ENCODE measurements at regions of chr9 and their contacts with region 1.

Region 1: GRCh38 chr9:92276331-92277032 is 17.0 kb downstream of the IARS1 start:
- DNase-seq: no peak
- H3K4me3 ChIP-seq: no peak overlapping the region
- H3K27ac ChIP-seq: no peak overlapping the region
- H3K4me1 ChIP-seq: peaks cover 15% of the 10 kb centered on the region
- CTCF ChIP-seq: no peak

Region 2: DNA sequence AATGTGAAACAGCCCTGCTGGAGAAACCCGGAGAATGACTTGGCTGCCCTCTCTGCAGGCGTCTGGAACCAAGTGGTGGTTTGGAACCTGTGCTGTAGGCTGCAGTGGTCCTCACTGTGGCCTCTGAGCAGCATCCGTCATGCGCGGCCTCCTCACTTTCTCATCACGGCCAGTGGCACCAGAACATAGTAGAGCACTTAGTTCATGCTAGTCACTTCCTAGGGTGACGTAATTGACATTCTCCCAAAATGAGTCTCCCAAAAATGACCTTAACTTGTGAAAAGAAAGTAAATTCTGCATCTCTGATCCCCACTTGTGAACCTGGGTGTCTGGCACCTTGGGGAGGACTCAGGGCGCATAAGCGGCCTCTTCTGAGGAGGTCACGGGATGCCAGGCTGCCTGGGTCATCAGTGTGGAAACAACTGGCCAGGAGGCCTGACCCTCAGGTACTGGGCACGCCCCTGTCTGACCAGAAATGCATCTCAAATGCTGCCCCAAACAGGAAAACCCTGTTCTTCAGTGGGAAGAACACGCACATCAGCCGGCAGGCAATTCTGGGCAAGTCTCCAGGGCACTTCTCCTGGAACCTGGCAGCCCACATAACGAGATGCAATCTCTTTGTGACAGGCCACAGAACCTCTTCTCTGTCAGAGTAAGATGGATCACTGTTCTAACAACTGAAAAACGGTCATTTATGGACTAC is 124.6 kb before region 1 on chr9:
- CTCF ChIA-PET with region 1: no interaction called
- POLR2A ChIA-PET with region 1: no interaction called
- intact Hi-C with region 1: no loop called
- DNase-seq: no peak
- H3K4me3 ChIP-seq: no peak overlapping the region
- H3K27ac ChIP-seq: no peak overlapping the region
- H3K4me1 ChIP-seq: no peaks in the 10 kb centered on the region
- CTCF ChIP-seq: no peak

Region 3: GRCh38 chr9:92223758-92224157 is 52.7 kb before region 1 on chr9:
- CTCF ChIA-PET with region 1: no interaction called
- POLR2A ChIA-PET with region 1: no interaction called
- intact Hi-C with region 1: no loop called
- DNase-seq: no peak
- H3K4me3 ChIP-seq: no peak overlapping the region
- H3K27ac ChIP-seq: no peak overlapping the region
- H3K4me1 ChIP-seq: no peaks in the 10 kb centered on the region
- CTCF ChIP-seq: no peak

Region 4: GRCh38 chr9:92242260-92243136 is 34.0 kb before region 1 on chr9:
- CTCF ChIA-PET with region 1: no interaction called
- POLR2A ChIA-PET with region 1: interaction called, 3 read pairs
- intact Hi-C with region 1: loop called (anchors 5 kb)
- DNase-seq: no peak
- H3K4me3 ChIP-seq: no peak overlapping the region
- H3K27ac ChIP-seq: no peak overlapping the region
- H3K4me1 ChIP-seq: no peaks in the 10 kb centered on the region
- CTCF ChIP-seq: 0 out of 2 replicates have a peak, but pooled peaks have one; percentile 35

Region 5: DNA sequence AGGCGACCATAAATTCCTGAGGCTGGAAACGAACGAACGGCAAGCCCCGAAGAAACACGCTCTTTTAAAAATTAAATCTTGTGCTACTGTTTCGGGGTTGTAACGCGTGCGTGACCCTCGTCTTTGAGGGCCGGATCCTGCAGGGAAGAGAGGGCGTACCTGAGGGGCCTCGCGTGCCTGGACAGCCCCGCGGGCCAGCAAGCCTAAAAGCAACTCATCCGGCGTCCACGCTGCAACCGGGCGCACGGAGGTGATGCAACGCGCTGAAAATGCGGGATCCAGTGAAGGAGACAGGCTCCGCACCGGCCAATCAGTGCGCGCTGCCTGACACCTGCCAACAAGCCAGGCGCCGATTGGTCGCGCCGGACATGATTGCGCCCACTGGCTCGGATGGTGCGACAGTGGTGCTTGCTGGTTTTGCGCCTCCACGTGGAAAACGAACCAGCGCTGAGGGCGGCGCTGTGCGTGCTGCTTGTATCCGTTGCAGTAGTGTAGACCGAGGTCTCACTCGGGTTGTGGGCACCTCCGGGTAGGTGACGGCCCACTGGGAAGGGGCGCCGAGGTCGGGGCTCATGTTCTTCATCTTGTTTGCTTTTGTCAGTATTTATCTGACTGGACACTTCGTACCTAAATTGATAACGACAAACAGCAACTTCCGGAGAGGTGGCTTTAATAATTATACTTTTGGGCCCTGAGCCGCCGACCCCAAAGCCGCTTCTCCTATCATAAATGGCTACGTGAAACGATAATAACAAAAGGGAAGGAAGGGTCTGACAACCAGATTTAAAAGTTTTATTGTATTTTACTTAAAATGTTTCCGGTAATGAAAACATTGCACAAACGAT is 17.2 kb after region 1 on chr9 and contains the start of gene IARS1:
- CTCF ChIA-PET with region 1: no interaction called
- POLR2A ChIA-PET with region 1: interaction called, 12 read pairs
- intact Hi-C with region 1: no loop called
- DNase-seq: peak; percentile 98
- H3K4me3 ChIP-seq: peak within 1 kb of the TSS; percentile 91
- H3K27ac ChIP-seq: peak within 1 kb of the TSS; percentile 92
- H3K4me1 ChIP-seq: peaks cover 63% of the 10 kb centered on the region
- CTCF ChIP-seq: peak; percentile 66
- total RNA-seq, gene IARS1: 352 and 392 TPM in 2 replicates